Posterior vena cava (tissue), 2 donors: ENCODE measurements at regions of chr1 and their contacts with region 1.

Region 1: GRCh38 chr1:59707178-59707791 is 107.5 kb upstream of the HOOK1 start:
- DNase-seq: peak; percentile 83

Region 2: DNA sequence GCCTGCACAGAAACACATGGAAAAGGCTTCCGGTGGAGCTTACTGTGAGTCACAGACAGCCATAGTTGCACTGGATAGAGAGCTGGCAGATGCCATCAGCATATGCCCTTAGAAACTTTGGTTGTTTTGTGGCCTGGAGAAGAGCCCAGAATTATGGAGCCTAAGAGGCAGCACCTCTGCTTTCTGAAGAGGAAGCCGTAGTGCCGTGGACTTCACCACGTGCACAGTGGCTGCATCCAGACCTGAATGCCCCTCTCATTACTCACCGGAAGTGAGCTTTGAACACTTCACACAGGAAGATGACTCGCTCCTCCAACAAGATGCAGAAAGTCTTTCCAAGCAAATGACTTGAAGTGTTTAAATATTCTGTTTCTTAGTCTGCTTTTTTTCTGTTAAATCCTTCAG is 951.8 kb before region 1 on chr1:
- intact Hi-C with region 1: loop called in 1 of 2 experiments (anchors 10 kb)
- DNase-seq: peak; percentile 88

Region 3: GRCh38 chr1:59625384-59625783 is 81.9 kb before region 1 on chr1:
- intact Hi-C with region 1: no loop called
- DNase-seq: no peak

Region 4: GRCh38 chr1:59730759-59731478 is 23.6 kb after region 1 on chr1:
- intact Hi-C with region 1: no loop called
- DNase-seq: peak; percentile 92